CD4-positive, alpha-beta memory T cell (primary cell): ENCODE measurements at regions of chr1 and their contacts with region 1.

Region 1: DNA sequence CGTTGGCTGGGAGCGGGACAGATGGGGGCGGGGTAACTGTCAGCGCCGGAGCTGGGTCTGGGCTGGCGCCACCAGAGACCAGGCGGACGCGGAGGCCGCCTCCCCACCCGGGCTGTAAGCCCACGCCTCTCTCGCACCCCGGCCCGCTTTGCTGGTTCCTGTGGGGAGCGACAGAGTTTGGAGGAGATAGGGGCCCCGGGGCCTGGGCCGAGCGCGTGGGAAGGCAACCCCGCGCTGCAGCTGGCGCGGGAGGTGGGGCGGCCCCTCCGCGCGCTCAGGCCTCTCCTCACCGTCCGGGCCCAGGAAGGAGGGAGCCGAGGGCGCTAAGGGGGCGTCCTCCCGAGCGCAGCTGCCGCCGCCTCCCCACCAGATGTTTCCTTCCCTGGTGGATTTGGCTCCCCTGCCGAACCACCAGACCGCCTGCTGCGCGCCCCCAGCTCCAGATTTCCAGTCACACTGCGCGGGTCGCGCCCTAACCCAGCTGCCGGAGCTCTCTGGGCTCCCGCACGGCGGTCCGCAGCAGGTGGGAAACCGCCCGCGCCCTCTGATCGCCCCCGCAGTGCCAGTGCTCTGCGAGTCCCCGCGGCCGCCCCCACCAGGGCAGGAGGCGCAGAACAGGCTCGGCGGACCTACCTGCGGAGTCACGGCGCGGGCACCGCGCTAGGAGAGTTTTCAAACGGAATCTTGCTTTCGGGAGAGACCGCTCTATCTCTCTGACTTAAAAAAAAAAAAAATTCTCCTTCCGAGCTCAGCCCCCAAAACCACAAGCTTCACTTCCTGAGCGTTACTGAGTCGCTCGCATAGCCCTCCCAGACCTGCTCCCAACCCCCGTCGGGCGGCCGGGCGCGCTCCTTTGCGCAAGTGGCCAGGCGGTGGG is 1.1 kb downstream of the GFI1 start:
- DNase-seq: peak; percentile 73 to 85 (median 77)
- H3K4me3 ChIP-seq: peak overlapping the region; percentile 84 to 92
- H3K4me3 Mint-ChIP-seq: peak overlapping the region; percentile 89 to 97 (median 94)
- H3K27ac ChIP-seq: peak overlapping the region; percentile 52
- H3K27ac Mint-ChIP-seq: peak overlapping the region; percentile 88 to 94 (median 91)
- H3K4me1 ChIP-seq: peaks cover 30% of the 10 kb centered on the region
- H3K4me1 Mint-ChIP-seq: peaks cover 14 to 69% (median 31%) of the 10 kb centered on the region in 4 donors
- H3K27me3 ChIP-seq: no peaks in the 10 kb centered on the region
- H3K27me3 Mint-ChIP-seq: no peaks in the 10 kb centered on the region

Region 2: GRCh38 chr1:90854397-90854924 is 1631.2 kb before region 1 on chr1:
- CTCF ChIA-PET with region 1: no interaction called
- POLR2A ChIA-PET with region 1: no interaction called
- intact Hi-C with region 1: no loop called
- DNase-seq: no peak
- H3K4me3 ChIP-seq: no peak overlapping the region
- H3K4me3 Mint-ChIP-seq: no peak overlapping the region
- H3K27ac ChIP-seq: no peak overlapping the region
- H3K27ac Mint-ChIP-seq: no peak overlapping the region
- H3K4me1 ChIP-seq: peaks cover 17% of the 10 kb centered on the region
- H3K4me1 Mint-ChIP-seq: peaks cover 8 to 14% (median 13%) of the 10 kb centered on the region in 4 donors
- H3K27me3 ChIP-seq: peaks cover 10% of the 10 kb centered on the region
- H3K27me3 Mint-ChIP-seq: peaks cover 20 to 21% of the 10 kb centered on the region in 2 donors

Region 3: GRCh38 chr1:91997607-91998195 is 487.9 kb before region 1 on chr1:
- CTCF ChIA-PET with region 1: interaction called, 4 read pairs
- POLR2A ChIA-PET with region 1: no interaction called
- intact Hi-C with region 1: loop called (anchors 10 kb)
- DNase-seq: peak; percentile 40 to 53 (median 46)
- H3K4me3 ChIP-seq: no peak overlapping the region
- H3K4me3 Mint-ChIP-seq: no peak overlapping the region
- H3K27ac ChIP-seq: no peak overlapping the region
- H3K27ac Mint-ChIP-seq: no peak overlapping the region
- H3K4me1 ChIP-seq: no peaks in the 10 kb centered on the region
- H3K4me1 Mint-ChIP-seq: no peaks in the 10 kb centered on the region
- H3K27me3 ChIP-seq: no peaks in the 10 kb centered on the region
- H3K27me3 Mint-ChIP-seq: no peaks in the 10 kb centered on the region

Region 4: GRCh38 chr1:92317836-92318493 is 167.7 kb before region 1 on chr1:
- CTCF ChIA-PET with region 1: interaction called, 135 read pairs
- POLR2A ChIA-PET with region 1: interaction called, 154 read pairs
- intact Hi-C with region 1: loop called (anchors 2 kb)
- DNase-seq: peak; percentile 27 to 56 (median 40)
- H3K4me3 ChIP-seq: no peak overlapping the region
- H3K4me3 Mint-ChIP-seq: peak overlapping the region; percentile 55 to 79 (median 62)
- H3K27ac ChIP-seq: peak overlapping the region; percentile 36
- H3K27ac Mint-ChIP-seq: peak overlapping the region; percentile 59 to 94 (median 90)
- H3K4me1 ChIP-seq: peaks cover 63% of the 10 kb centered on the region
- H3K4me1 Mint-ChIP-seq: peaks cover 39 to 61% (median 48%) of the 10 kb centered on the region in 4 donors
- H3K27me3 ChIP-seq: no peaks in the 10 kb centered on the region
- H3K27me3 Mint-ChIP-seq: no peaks in the 10 kb centered on the region

Region 5: GRCh38 chr1:92340154-92340553 is 145.5 kb before region 1 on chr1:
- CTCF ChIA-PET with region 1: no interaction called
- POLR2A ChIA-PET with region 1: no interaction called
- intact Hi-C with region 1: no loop called
- DNase-seq: no peak
- H3K4me3 ChIP-seq: no peak overlapping the region
- H3K4me3 Mint-ChIP-seq: no peak overlapping the region
- H3K27ac ChIP-seq: no peak overlapping the region
- H3K27ac Mint-ChIP-seq: no peak overlapping the region
- H3K4me1 ChIP-seq: no peaks in the 10 kb centered on the region
- H3K4me1 Mint-ChIP-seq: peaks cover 0 to 3% (median 0%) of the 10 kb centered on the region in 4 donors
- H3K27me3 ChIP-seq: no peaks in the 10 kb centered on the region
- H3K27me3 Mint-ChIP-seq: no peaks in the 10 kb centered on the region

Region 6: DNA sequence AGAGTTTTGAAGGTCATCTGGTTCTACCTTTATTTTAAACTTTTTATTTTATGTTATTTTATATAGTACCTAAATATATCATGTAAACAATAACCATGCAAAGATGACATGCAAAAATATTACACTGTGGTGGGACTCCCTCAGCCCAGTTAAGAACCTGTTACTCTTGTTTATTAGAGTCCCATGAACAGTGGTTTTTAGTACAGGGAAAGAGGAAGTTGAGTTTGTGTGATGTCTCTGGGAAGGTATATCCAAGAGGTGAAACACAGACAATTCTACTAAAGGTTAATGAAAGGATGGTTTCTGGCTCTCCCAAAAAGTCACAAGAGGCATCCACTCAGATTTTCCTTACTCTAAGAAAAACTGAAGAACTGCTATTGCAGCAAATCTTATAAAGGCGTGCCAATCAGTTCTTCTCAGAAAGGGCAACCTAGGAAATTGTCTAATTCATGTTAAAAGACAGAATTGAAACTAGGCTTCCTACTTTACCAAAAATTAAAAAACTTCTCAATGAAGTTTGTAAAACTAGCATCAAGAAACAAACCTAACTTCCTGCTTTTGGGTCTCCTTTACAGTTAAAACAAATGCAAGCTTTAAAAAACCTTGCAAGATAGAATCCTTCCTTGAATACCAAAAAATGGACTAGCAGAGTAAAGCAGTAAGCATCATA is 18.8 kb before region 1 on chr1:
- CTCF ChIA-PET with region 1: interaction called, 5 read pairs
- POLR2A ChIA-PET with region 1: interaction called, 14 read pairs
- intact Hi-C with region 1: no loop called
- DNase-seq: no peak
- H3K4me3 ChIP-seq: no peak overlapping the region
- H3K4me3 Mint-ChIP-seq: no peak overlapping the region
- H3K27ac ChIP-seq: no peak overlapping the region
- H3K27ac Mint-ChIP-seq: peak overlapping the region in 1 of 7 donors; percentile 13
- H3K4me1 ChIP-seq: peaks cover 29% of the 10 kb centered on the region
- H3K4me1 Mint-ChIP-seq: peaks cover 22 to 45% (median 31%) of the 10 kb centered on the region in 4 donors
- H3K27me3 ChIP-seq: no peaks in the 10 kb centered on the region
- H3K27me3 Mint-ChIP-seq: no peaks in the 10 kb centered on the region

Region 7: DNA sequence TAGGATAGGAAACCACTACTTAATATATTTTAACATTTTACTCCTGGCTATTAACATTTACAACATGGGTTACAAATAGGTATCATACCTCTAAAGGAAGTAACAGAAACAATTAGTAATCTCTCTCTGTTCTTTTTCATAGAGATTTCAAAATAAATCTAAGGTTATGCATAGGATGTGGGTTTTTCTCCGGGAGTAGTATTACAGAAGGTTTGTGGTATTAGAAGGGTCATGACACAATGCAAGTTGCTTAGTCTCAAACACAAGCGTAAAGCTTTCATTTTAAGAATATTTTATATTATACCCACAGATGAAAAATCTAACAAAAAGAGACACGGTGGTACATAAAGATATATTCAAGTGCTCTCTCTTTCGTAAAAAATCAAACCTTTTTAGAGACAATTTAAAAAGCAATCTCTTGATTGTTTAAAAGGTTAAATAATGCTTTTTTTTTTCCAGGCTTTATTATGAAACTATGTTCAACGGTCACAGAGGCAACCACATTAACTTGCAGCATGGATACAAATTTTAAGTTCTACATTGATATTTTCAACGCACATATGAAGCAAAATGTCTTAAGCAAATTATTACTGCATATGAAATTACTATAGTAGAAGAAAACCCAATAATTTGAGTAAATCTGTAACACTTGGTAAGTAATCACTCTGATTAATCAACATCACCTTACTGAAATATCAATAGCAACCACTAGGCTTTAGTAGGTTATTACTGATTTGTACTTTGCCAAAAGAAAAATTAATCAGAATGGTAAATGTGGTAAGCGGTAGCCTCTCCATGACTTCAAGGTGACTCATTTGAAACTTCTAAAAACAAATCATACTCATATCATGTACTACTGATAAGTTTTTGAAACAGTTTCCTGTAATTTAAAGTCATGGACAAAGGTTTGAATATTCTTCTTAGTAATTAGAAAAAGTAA is 98.5 kb after region 1 on chr1:
- CTCF ChIA-PET with region 1: interaction called, 21 read pairs
- POLR2A ChIA-PET with region 1: interaction called, 101 read pairs
- intact Hi-C with region 1: loop called (anchors 1 kb)
- DNase-seq: peak; percentile 39 to 79 (median 67)
- H3K4me3 ChIP-seq: peak overlapping the region; percentile 13 to 29
- H3K4me3 Mint-ChIP-seq: peak overlapping the region; percentile 41 to 75 (median 66)
- H3K27ac ChIP-seq: no peak overlapping the region
- H3K27ac Mint-ChIP-seq: peak overlapping the region; percentile 44 to 84 (median 62)
- H3K4me1 ChIP-seq: peaks cover 44% of the 10 kb centered on the region
- H3K4me1 Mint-ChIP-seq: peaks cover 24 to 53% (median 40%) of the 10 kb centered on the region in 4 donors
- H3K27me3 ChIP-seq: no peaks in the 10 kb centered on the region
- H3K27me3 Mint-ChIP-seq: no peaks in the 10 kb centered on the region

Region 8: GRCh38 chr1:92623187-92623778 is 137.7 kb after region 1 on chr1:
- CTCF ChIA-PET with region 1: no interaction called
- POLR2A ChIA-PET with region 1: no interaction called
- intact Hi-C with region 1: no loop called
- DNase-seq: peak in 4 of 5 donors; percentile 29 to 42 (median 36)
- H3K4me3 ChIP-seq: no peak overlapping the region
- H3K4me3 Mint-ChIP-seq: no peak overlapping the region
- H3K27ac ChIP-seq: no peak overlapping the region
- H3K27ac Mint-ChIP-seq: no peak overlapping the region
- H3K4me1 ChIP-seq: no peaks in the 10 kb centered on the region
- H3K4me1 Mint-ChIP-seq: no peaks in the 10 kb centered on the region
- H3K27me3 ChIP-seq: no peaks in the 10 kb centered on the region
- H3K27me3 Mint-ChIP-seq: no peaks in the 10 kb centered on the region

Region 9: GRCh38 chr1:92679980-92680379 is 194.4 kb after region 1 on chr1:
- CTCF ChIA-PET with region 1: no interaction called
- POLR2A ChIA-PET with region 1: no interaction called
- intact Hi-C with region 1: no loop called
- DNase-seq: no peak
- H3K4me3 ChIP-seq: no peak overlapping the region
- H3K4me3 Mint-ChIP-seq: no peak overlapping the region
- H3K27ac ChIP-seq: no peak overlapping the region
- H3K27ac Mint-ChIP-seq: no peak overlapping the region
- H3K4me1 ChIP-seq: no peaks in the 10 kb centered on the region
- H3K4me1 Mint-ChIP-seq: no peaks in the 10 kb centered on the region
- H3K27me3 ChIP-seq: no peaks in the 10 kb centered on the region
- H3K27me3 Mint-ChIP-seq: peaks cover 6 to 9% of the 10 kb centered on the region in 2 donors